GM10248 (cell line): ENCODE measurements at regions of chr12 and their contacts with region 1.

Region 1: DNA sequence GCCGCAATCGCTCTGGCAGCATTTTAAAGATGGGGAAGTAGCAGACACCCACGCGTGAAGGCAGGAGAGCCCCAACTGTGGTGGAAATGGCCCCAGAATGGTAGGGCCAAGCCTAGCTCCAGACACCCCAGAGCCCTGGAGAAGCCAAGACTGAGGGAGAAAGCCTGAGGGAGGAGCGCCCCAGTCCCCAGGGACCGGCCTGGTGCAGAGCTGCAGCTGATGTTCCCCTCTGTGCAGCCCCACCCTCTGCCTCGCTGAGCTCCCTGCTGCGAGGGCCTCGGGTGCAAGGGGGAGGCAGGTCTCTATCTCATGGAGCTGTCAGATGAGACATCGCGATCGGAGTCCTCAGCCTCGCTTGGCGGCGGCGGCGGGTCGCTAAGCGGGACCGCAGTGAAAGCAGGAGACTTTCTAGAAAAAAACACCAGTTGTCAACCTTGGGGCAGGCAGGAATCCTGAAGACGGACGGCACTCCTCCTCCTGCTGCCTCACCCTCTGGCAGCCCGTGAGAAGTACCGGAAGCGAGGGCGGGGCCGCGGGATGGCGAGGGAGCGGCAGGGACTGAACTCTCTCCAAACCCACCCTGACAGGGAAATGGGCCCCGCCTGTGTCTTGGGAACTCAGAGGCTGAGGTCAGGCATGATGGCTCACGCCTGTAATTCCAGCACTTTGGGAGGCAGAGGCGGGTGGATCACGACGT is 6.0 kb downstream of the GAPDH start:
- DNase-seq: peak; percentile 66
- CTCF ChIP-seq: no peak

Region 2: GRCh38 chr12:5417500-5417899 is 1122.8 kb before region 1 on chr12:
- CTCF ChIA-PET with region 1: no interaction called
- POLR2A ChIA-PET with region 1: no interaction called
- DNase-seq: no peak
- CTCF ChIP-seq: no peak

Region 3: GRCh38 chr12:6335451-6336078 is 204.8 kb before region 1 on chr12:
- CTCF ChIA-PET with region 1: interaction called, 14 read pairs
- POLR2A ChIA-PET with region 1: no interaction called
- DNase-seq: peak; percentile 92
- CTCF ChIP-seq: peak; percentile 73

Region 4: GRCh38 chr12:6416596-6416995 is 123.7 kb before region 1 on chr12:
- CTCF ChIA-PET with region 1: interaction called, 112 read pairs
- POLR2A ChIA-PET with region 1: no interaction called
- DNase-seq: no peak
- CTCF ChIP-seq: no peak

Region 5: GRCh38 chr12:6493497-6494257 is 46.7 kb before region 1 on chr12 and contains the start of gene NCAPD2:
- CTCF ChIA-PET with region 1: interaction called, 13 read pairs
- POLR2A ChIA-PET with region 1: no interaction called
- DNase-seq: peak; percentile 96
- CTCF ChIP-seq: no peak

Region 6: DNA sequence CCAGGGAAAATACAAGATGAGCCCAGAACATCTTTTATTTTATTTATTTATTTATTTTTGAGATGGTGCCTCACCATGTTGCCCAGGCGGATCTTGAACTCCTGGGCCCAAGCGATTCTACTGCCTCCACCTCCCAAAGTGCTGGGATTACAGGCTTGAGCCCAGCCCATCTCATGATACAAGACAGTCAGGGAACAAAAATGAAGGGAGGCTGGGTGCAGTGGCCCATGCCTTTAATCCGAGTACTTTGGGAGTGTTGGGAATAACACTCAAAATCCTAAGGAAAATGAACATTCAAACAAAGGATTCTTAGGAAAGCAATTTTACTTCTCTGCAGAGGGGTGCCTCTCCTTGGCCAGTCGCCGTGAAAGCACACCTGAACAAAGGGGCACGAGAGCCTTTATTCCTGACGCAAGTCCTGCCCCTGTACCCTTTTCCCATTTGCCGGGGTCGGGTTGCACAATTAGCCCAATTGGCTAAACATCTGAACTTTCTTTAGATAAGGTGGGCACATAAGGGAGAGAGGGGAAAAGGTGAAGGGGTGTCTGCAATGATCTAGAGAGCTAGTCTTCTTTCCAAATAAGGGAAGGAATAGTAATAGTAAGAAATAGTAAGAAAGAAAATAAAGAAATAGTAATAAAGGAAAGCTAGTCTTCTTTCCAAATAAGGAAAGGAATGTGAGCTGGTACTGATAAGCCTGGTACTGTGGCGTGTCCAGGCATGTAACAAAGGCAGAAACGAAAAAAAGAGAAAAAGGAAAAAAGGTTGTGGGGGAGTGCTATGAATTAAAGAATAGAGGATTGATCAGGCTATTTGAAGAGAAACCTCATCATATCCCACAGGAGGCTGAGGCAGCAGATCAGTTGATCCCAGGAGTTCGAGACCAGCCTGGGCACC is 33.0 kb before region 1 on chr12:
- CTCF ChIA-PET with region 1: interaction called, 18 read pairs
- POLR2A ChIA-PET with region 1: interaction called, 3 read pairs
- DNase-seq: no peak
- CTCF ChIP-seq: no peak

Region 7: GRCh38 chr12:6528887-6529235 is 11.5 kb before region 1 on chr12:
- CTCF ChIA-PET with region 1: interaction called, 33 read pairs
- POLR2A ChIA-PET with region 1: no interaction called
- DNase-seq: no peak
- CTCF ChIP-seq: no peak

Region 8: GRCh38 chr12:6620137-6620884 is 80.0 kb after region 1 on chr12:
- CTCF ChIA-PET with region 1: no interaction called
- POLR2A ChIA-PET with region 1: no interaction called
- DNase-seq: no peak
- CTCF ChIP-seq: peak; percentile 19

Region 9: DNA sequence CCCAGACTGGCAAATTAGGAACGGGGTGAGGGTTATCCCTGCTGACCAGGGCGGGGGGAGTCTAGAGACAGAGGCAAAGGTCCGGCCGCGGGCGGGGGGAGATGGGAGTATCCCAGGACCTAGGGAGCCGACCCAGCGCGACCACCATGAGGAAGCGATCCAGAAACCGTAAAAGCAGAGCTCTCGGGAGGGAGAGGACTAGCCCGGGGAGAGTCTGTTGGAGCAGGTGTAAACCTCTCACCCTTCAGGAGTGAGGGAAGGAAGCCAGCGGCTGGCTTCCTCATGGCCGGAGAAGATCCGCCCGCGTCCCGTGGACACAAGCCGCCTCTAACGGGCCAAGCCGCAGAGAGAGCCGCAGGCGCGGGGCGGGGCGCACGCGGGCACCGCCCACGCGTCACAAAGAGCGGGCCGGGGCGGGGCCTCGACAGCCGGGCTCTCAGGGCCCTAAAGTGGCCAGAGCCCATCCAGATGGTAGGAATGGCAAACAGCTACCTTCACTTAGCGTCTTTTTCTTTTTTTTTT is 106.8 kb after region 1 on chr12 and contains the start of gene ACRBP:
- CTCF ChIA-PET with region 1: no interaction called
- POLR2A ChIA-PET with region 1: no interaction called
- DNase-seq: peak; percentile 78
- CTCF ChIP-seq: no peak